ENCODE measurements at regions of chr6 and their contacts with region 1.

Region 1: GRCh38 chr6:65202738-65203137 is 504.3 kb downstream of the EYS start:
- DNase-seq: no peak
- H3K4me3 ChIP-seq: no peak overlapping the region
- H3K27ac ChIP-seq: no peak overlapping the region
- H3K4me1 ChIP-seq: no peaks in the 10 kb centered on the region
- H3K27me3 ChIP-seq: no peaks in the 10 kb centered on the region
- CTCF ChIP-seq: no peak

Region 2: GRCh38 chr6:64143101-64143500 is 1059.6 kb before region 1 on chr6:
- CTCF ChIA-PET with region 1: no interaction called
- POLR2A ChIA-PET with region 1: interaction called, 17 read pairs
- intact Hi-C with region 1: no loop called
- DNase-seq: no peak
- H3K4me3 ChIP-seq: no peak overlapping the region
- H3K27ac ChIP-seq: no peak overlapping the region
- H3K4me1 ChIP-seq: no peaks in the 10 kb centered on the region
- H3K27me3 ChIP-seq: no peaks in the 10 kb centered on the region
- CTCF ChIP-seq: no peak

Region 3: DNA sequence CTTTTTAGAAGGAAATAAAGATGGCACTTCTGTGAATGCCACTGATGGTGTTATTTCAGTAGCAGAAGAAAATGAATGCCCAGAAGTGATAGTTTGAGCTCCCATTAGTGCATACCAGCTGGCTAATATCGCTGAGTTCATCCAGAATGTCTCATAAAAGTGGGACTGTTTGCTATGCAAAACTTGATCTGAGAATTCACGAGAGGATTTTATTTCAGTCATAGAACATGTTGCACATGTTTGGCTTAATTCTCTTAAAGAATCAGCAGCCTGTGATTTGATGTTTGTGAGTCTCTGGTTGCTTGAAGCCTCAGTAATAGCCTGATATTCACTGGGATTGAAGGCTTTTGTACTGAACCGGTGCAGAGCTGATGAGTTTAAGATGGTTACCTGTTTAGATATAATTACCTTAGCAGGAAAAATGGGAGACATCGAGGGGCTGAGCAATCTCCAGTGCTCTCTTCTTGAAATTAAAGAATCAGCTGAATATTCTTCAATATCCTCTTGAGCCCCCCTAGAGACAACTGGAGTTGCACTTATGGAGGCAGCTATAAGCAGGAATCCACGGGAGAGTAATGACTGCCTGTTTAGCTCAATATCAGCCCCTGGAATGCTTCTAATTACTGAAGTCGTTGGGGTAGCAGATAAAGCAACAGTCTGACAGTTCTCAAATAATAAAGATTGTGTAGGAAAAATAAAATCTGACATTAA is 611.6 kb before region 1 on chr6:
- CTCF ChIA-PET with region 1: no interaction called
- POLR2A ChIA-PET with region 1: no interaction called
- intact Hi-C with region 1: no loop called
- DNase-seq: no peak
- H3K4me3 ChIP-seq: no peak overlapping the region
- H3K27ac ChIP-seq: no peak overlapping the region
- H3K4me1 ChIP-seq: no peaks in the 10 kb centered on the region
- H3K27me3 ChIP-seq: no peaks in the 10 kb centered on the region
- CTCF ChIP-seq: no peak